RWPE1 (cell line): ENCODE measurements at regions of chr5 and their contacts with region 1.

Region 1: DNA sequence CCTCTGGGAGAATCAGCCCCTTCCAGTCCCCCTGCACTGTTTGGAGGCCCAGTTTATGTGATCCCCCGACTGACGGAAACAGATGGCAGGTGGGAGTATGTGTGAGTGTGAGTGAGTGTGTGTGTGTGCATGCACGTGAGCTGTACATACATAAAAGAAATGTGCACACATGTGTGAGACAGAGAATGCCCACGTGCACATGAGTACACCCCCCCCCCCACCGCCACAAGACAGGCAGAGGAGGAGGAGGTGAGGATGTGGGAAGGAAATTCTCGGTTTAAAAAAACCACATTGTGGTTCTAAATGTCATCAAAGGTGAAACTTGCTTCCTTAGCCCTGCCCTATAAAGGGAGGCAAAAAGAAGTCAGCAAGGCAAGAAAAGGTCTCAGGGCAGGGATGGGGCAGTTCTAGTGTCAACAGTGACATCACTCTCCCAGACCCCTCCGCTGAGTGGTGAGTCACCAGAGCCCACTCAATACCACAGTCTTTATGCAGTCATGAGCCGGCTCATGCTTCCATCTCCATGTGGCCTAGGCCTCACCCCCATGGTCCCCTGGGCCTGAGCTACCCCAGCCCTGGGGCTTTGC is 79.2 kb upstream of the HSPA9 start:
- DNase-seq: no peak
- H3K27ac ChIP-seq: no peak overlapping the region
- CTCF ChIP-seq: no peak

Region 2: GRCh38 chr5:138641547-138642298 is 12.7 kb before region 1 on chr5:
- CTCF ChIA-PET with region 1: interaction called, 14 read pairs
- POLR2A ChIA-PET with region 1: interaction called, 8 read pairs
- DNase-seq: peak; percentile 68
- H3K27ac ChIP-seq: no peak overlapping the region
- CTCF ChIP-seq: peak; percentile 59

Region 3: DNA sequence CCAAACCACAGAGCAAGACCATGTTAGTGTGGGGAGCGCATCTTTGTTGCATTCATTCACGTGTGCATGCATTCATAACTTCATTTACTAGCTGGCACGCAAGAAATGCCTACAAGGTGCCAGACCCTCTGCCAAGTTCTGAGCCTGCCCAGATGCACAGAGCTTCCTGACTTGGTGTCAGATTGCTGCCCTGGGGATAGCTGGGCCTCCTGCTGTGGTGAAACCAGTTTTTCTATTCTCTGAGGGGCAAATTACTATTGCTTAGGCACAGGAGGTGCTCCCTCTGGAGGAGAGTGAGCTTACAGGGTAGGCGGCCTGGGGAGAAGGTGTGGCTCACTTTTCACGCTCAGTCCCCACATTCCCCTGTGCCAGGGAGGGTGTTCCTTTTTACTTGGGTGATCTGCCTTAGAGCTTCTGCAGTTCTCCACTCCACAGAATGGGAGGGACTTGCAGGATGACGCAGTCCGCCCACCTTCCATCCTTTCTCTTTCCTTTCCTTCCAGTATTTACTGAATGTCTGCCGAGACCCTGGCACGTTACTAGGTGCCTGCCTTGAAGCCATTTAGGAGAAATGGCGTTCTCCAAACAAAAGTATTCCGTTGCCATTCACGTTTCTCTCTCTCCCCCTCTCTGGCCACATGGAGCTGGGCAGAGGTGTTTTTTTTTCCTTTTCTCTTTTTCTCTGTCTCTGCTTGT is 70.9 kb after region 1 on chr5:
- CTCF ChIA-PET with region 1: interaction called, 18 read pairs
- POLR2A ChIA-PET with region 1: no interaction called
- DNase-seq: peak; percentile 92
- H3K27ac ChIP-seq: peak overlapping the region; percentile 63
- CTCF ChIP-seq: no peak; the same call in 1 of the 2 replicates